HepG2 (cell line): ENCODE measurements at regions of chr2 and their contacts with region 1.

Region 1: GRCh38 chr2:20568501-20569463 is 82.1 kb downstream of the HS1BP3 start:
- DNase-seq: no peak
- ATAC-seq: no peak
- H3K4me3 ChIP-seq: no peak overlapping the region
- H3K27ac ChIP-seq: peak overlapping the region; percentile 49
- H3K4me1 ChIP-seq: peaks cover 96% of the 10 kb centered on the region
- H3K27me3 ChIP-seq: no peaks in the 10 kb centered on the region
- CTCF ChIP-seq: no peak
- EP300 ChIP-seq: no peak
- POLR2A ChIP-seq: no peak
- RAD21 ChIP-seq: no peak

Region 2: GRCh38 chr2:20551260-20551944 is 17.4 kb before region 1 on chr2:
- CTCF ChIA-PET with region 1: no interaction called
- POLR2A ChIA-PET with region 1: no interaction called
- in situ Hi-C with region 1: no loop called
- intact Hi-C with region 1: loop called (anchors 1 kb)
- DNase-seq: no peak
- ATAC-seq: no peak
- H3K4me3 ChIP-seq: no peak overlapping the region
- H3K27ac ChIP-seq: no peak overlapping the region
- H3K4me1 ChIP-seq: peaks cover 33% of the 10 kb centered on the region
- H3K27me3 ChIP-seq: no peaks in the 10 kb centered on the region
- CTCF ChIP-seq: no peak
- EP300 ChIP-seq: no peak
- POLR2A ChIP-seq: no peak
- RAD21 ChIP-seq: no peak

Region 3: DNA sequence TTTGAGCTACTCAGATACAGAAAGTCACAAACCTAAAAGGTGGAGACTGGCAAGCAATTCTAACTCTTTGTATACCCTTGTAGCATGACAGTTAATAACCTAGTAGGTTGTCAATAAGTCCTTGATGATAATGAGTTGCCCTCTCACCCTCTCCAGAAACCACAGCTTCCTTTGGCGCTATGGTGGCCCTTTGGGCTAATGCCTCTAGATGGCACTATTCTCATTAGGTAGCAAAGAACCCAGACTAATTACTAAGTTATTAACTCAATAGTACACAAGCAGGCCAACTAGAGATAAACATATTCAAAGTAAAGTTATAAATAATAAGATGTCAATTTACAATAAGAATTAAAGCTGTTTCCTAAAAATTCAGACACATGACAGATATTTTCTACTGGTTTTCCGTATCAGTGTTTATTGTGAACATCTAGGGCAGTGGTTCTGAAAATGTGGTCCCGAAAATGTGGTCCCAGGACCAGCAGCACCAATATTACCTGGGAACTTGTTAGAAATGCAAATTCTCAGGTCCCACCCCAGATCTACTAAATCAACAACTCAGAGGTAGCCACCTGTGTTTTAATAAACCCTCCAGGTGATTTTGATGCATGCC is 213.0 kb after region 1 on chr2:
- CTCF ChIA-PET with region 1: no interaction called
- POLR2A ChIA-PET with region 1: no interaction called
- in situ Hi-C with region 1: no loop called
- intact Hi-C with region 1: no loop called
- DNase-seq: peak; percentile 51
- ATAC-seq: peak; percentile 92
- H3K4me3 ChIP-seq: no peak overlapping the region
- H3K27ac ChIP-seq: no peak overlapping the region
- H3K4me1 ChIP-seq: no peaks in the 10 kb centered on the region
- H3K27me3 ChIP-seq: no peaks in the 10 kb centered on the region
- CTCF ChIP-seq: peak; percentile 80
- EP300 ChIP-seq: no peak
- POLR2A ChIP-seq: no peak
- RAD21 ChIP-seq: peak; percentile 78